CD8-positive, alpha-beta T cell (primary cell): ENCODE measurements at regions of chr1 and their contacts with region 1.

Region 1: GRCh38 chr1:95809391-95809790 is 575.4 kb downstream of the RWDD3 start:
- DNase-seq: no peak
- ATAC-seq: no peak
- H3K4me3 ChIP-seq: no peak overlapping the region
- H3K4me3 Mint-ChIP-seq: no peak overlapping the region
- H3K27ac ChIP-seq: no peak overlapping the region
- H3K27ac Mint-ChIP-seq: no peak overlapping the region
- H3K4me1 ChIP-seq: no peaks in the 10 kb centered on the region
- H3K4me1 Mint-ChIP-seq: no peaks in the 10 kb centered on the region
- H3K27me3 ChIP-seq: no peaks in the 10 kb centered on the region
- H3K27me3 Mint-ChIP-seq: no peaks in the 10 kb centered on the region
- CTCF ChIP-seq: no peak

Region 2: GRCh38 chr1:94739521-94740061 is 1069.8 kb before region 1 on chr1:
- CTCF ChIA-PET with region 1: no interaction called
- POLR2A ChIA-PET with region 1: no interaction called
- intact Hi-C with region 1: no loop called
- DNase-seq: no peak
- ATAC-seq: no peak
- H3K4me3 ChIP-seq: no peak overlapping the region
- H3K4me3 Mint-ChIP-seq: no peak overlapping the region
- H3K27ac ChIP-seq: no peak overlapping the region
- H3K27ac Mint-ChIP-seq: no peak overlapping the region
- H3K4me1 ChIP-seq: no peaks in the 10 kb centered on the region
- H3K4me1 Mint-ChIP-seq: peaks cover 5% of the 10 kb centered on the region
- H3K27me3 ChIP-seq: no peaks in the 10 kb centered on the region
- H3K27me3 Mint-ChIP-seq: peaks cover 10% of the 10 kb centered on the region
- CTCF ChIP-seq: no peak

Region 3: DNA sequence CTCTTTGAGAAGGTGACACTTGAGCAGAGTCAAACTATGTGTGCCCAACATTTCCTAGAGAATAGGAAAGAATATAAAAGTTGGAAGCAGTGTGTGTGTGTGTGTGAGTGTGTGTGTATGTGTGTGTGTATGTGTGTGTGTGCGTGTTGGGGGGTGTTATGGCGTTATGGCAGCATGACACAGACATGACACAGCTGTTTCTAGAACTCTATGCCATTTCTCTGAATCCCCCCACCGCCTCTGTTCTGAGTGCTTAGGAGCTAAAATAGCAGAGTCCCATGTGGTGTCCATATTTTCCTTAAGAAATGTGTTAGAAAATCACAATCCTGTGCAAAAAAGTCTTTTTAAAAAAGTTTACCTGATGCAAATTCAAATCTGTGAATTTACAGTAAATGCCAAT is 19.3 kb before region 1 on chr1:
- CTCF ChIA-PET with region 1: no interaction called
- POLR2A ChIA-PET with region 1: no interaction called
- intact Hi-C with region 1: no loop called
- DNase-seq: no peak
- ATAC-seq: no peak
- H3K4me3 ChIP-seq: no peak overlapping the region
- H3K4me3 Mint-ChIP-seq: no peak overlapping the region
- H3K27ac ChIP-seq: no peak overlapping the region
- H3K27ac Mint-ChIP-seq: no peak overlapping the region
- H3K4me1 ChIP-seq: no peaks in the 10 kb centered on the region
- H3K4me1 Mint-ChIP-seq: no peaks in the 10 kb centered on the region
- H3K27me3 ChIP-seq: no peaks in the 10 kb centered on the region
- H3K27me3 Mint-ChIP-seq: no peaks in the 10 kb centered on the region
- CTCF ChIP-seq: no peak

Region 4: DNA sequence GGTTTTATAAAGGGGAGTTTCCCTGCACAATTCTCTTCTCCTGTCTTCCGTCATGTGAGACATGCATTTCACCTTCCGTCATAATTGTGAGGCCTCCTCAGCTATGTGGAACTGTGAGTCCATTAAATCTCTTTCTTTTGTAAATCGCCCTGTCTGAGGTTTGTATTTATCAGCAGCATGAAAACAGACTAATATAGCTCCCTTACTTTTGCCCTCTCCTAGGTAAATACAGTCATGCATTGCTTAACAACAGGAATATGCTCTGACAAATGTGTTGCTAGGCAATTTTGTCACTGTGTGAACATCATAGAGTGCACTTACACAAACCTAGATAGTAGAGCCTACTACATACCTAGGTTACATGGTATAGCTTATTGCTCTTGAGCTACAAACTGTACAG is 41.4 kb after region 1 on chr1:
- CTCF ChIA-PET with region 1: no interaction called
- POLR2A ChIA-PET with region 1: no interaction called
- intact Hi-C with region 1: loop called in 1 of 2 experiments (anchors 5 kb)
- DNase-seq: no peak
- ATAC-seq: no peak
- H3K4me3 ChIP-seq: no peak overlapping the region
- H3K4me3 Mint-ChIP-seq: no peak overlapping the region
- H3K27ac ChIP-seq: no peak overlapping the region
- H3K27ac Mint-ChIP-seq: no peak overlapping the region
- H3K4me1 ChIP-seq: no peaks in the 10 kb centered on the region
- H3K4me1 Mint-ChIP-seq: no peaks in the 10 kb centered on the region
- H3K27me3 ChIP-seq: no peaks in the 10 kb centered on the region
- H3K27me3 Mint-ChIP-seq: no peaks in the 10 kb centered on the region
- CTCF ChIP-seq: no peak

Region 5: DNA sequence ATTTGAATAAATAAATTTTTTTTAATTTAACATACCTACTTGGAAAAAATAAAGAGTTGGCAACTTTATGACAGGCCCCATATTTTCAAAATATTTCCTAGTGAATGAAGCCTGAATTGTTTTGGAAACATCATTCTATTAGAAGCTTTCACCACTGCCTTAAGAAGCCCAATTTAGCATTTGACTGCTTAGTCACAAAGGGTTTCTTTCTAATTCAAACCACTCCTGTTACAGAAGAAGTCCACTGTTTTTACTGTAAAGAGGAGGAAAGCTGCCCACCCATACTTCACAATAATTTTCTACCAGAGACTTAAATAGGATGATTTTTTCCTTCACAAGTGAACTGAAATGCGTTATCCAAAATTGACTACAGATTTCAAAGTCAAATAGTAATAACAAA is 377.6 kb after region 1 on chr1:
- CTCF ChIA-PET with region 1: no interaction called
- POLR2A ChIA-PET with region 1: no interaction called
- intact Hi-C with region 1: no loop called
- DNase-seq: no peak
- ATAC-seq: no peak
- H3K4me3 ChIP-seq: no peak overlapping the region
- H3K4me3 Mint-ChIP-seq: no peak overlapping the region
- H3K27ac ChIP-seq: no peak overlapping the region
- H3K27ac Mint-ChIP-seq: no peak overlapping the region
- H3K4me1 ChIP-seq: no peaks in the 10 kb centered on the region
- H3K4me1 Mint-ChIP-seq: no peaks in the 10 kb centered on the region
- H3K27me3 ChIP-seq: no peaks in the 10 kb centered on the region
- H3K27me3 Mint-ChIP-seq: no peaks in the 10 kb centered on the region
- CTCF ChIP-seq: no peak